Transverse colon (tissue), 4 donors: ENCODE measurements at regions of chr9 and their contacts with region 1.

Region 1: GRCh38 chr9:124894741-124895170 is 32.8 kb downstream of the ARPC5L start:
- DNase-seq: no peak
- H3K4me3 ChIP-seq: no peak overlapping the region
- H3K27ac ChIP-seq: no peak overlapping the region
- H3K4me1 ChIP-seq: no peaks in the 10 kb centered on the region
- H3K27me3 ChIP-seq: no peaks in the 10 kb centered on the region
- CTCF ChIP-seq: peak in 3 of 5 experiments; percentile 10 to 16 (median 14)
- EP300 ChIP-seq: no peak
- POLR2A ChIP-seq: no peak

Region 2: GRCh38 chr9:124079176-124079925 is 815.4 kb before region 1 on chr9:
- in situ Hi-C with region 1: no loop called
- intact Hi-C with region 1: loop called (anchors 5 kb)
- DNase-seq: no peak
- H3K4me3 ChIP-seq: no peak overlapping the region
- H3K27ac ChIP-seq: no peak overlapping the region
- H3K4me1 ChIP-seq: no peaks in the 10 kb centered on the region
- H3K27me3 ChIP-seq: peaks cover 13% of the 10 kb centered on the region
- CTCF ChIP-seq: no peak
- EP300 ChIP-seq: no peak
- POLR2A ChIP-seq: no peak

Region 3: DNA sequence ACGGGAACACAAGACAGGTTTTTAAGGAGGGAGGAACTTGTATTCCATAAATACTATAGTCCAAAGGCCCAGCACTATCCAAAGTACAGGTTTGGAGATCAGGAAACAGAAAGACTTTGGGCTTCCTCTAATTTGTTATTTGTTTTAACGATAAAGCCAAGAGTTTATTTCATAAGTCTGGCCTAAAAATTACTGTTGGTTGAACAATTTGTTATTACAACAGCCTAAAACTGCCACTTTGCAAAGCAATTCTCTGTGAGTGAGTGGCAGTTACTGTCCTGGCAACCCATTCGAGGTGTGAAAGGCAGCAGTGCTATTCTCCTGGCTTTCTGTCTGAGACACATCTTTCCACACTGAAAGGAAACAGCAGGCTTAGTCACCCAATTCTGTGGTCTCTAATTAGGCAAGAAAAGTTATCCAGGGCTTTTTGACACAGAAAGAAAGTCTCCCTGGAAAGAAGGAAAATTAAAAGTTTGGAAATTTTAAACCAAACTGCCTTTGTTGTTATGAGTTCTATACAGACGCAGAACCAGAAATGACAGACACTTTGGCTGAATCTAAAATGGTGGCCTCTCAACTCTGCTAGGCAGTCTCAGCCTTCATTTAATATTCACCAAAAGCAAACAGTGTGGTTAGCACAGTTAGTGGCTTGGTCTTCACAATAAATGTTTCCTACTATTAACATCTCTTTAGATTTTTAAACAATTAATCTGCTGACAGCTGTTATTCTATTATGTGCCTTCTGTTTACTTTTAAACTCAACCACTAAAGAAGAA is 513.4 kb before region 1 on chr9:
- in situ Hi-C with region 1: no loop called
- intact Hi-C with region 1: no loop called
- DNase-seq: no peak
- H3K4me3 ChIP-seq: no peak overlapping the region
- H3K27ac ChIP-seq: no peak overlapping the region
- H3K4me1 ChIP-seq: peaks cover 0 to 15% (median 1%) of the 10 kb centered on the region in 4 donors
- H3K27me3 ChIP-seq: no peaks in the 10 kb centered on the region
- CTCF ChIP-seq: no peak
- EP300 ChIP-seq: no peak
- POLR2A ChIP-seq: no peak

Region 4: GRCh38 chr9:124868511-124869465 is 26.0 kb before region 1 on chr9:
- in situ Hi-C with region 1: no loop called
- intact Hi-C with region 1: no loop called
- DNase-seq: peak; percentile 91
- H3K4me3 ChIP-seq: peak overlapping the region; percentile 66 to 90 (median 88)
- H3K27ac ChIP-seq: peak overlapping the region; percentile 94 to 100 (median 98)
- H3K4me1 ChIP-seq: peaks cover 26 to 44% (median 42%) of the 10 kb centered on the region in 4 donors
- H3K27me3 ChIP-seq: no peaks in the 10 kb centered on the region
- CTCF ChIP-seq: no peak
- EP300 ChIP-seq: no peak
- POLR2A ChIP-seq: peak; percentile 94